HCT116 (cell line): ENCODE measurements at regions of chr14 and their contacts with region 1.

Region 1: DNA sequence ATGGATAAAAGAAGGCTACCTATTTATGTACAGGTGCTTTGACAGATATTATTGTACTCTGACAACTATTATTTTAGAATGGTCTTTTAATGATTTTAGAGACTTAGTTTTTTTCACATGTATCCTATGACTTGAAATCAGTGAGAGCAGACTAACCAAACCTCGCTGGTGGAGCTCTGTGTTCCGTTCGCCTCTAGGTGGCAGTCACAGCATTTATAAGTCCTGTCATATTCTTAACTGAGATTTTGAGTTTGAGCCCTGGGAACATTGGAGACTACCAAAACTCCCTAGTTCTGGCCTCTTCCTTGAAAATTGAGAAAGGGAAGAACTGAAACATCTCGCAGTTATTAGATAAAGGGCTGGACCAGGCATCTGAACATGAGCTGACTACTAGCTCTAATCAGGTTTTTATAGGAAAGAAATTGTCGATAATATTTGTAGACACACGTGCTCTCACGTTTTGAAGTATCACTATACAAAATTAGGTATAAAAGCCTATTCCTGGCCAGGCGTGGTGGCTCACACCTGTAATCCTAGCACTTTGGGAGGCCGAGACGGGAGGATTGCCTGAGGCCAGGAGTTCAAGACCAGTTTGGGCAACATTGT is 48.3 kb downstream of the TTLL5 start:
- DNase-seq: peak; percentile 68
- ATAC-seq: peak; percentile 58
- H3K4me3 ChIP-seq: no peak overlapping the region
- H3K27ac ChIP-seq: no peak overlapping the region
- H3K4me1 ChIP-seq: peaks cover 17 to 18% of the 10 kb centered on the region in 2 experiments
- H3K27me3 ChIP-seq: no peaks in the 10 kb centered on the region
- CTCF ChIP-seq: peak; percentile 68 to 89 (median 78)
- POLR2A ChIP-seq: no peak
- RAD21 ChIP-seq: peak; percentile 76

Region 2: DNA sequence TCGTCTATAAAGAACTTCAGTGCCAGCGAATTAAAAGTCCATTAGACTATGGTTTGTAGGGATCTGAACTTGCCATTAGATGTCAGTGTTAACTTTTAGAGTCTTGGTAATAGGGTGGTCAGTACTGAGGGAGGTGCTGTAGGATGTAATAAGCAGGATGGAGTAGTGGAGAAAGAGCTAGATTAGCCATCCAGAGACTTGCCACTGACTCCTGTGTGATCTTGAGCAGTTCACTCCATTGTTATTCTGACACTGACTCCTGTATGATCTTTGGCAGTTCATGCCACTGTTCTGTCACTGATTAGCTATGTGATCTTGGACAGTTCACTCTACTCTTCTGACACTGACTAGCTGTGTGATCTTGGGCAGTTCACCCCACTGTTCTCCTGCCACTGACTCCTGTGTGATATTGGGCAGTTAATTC is 85.3 kb after region 1 on chr14:
- CTCF ChIA-PET with region 1: interaction called, 40 read pairs
- POLR2A ChIA-PET with region 1: no interaction called
- RAD21 ChIA-PET with region 1: interaction called, 3 to 4 read pairs
- intact Hi-C with region 1: no loop called
- DNase-seq: peak; percentile 7
- ATAC-seq: peak; percentile 80
- H3K4me3 ChIP-seq: no peak overlapping the region
- H3K27ac ChIP-seq: no peak overlapping the region
- H3K4me1 ChIP-seq: no peaks in the 10 kb centered on the region
- H3K27me3 ChIP-seq: no peaks in the 10 kb centered on the region
- CTCF ChIP-seq: peak; percentile 22 to 85 (median 41); a peak in 4 of 6 replicates
- POLR2A ChIP-seq: no peak
- RAD21 ChIP-seq: peak; percentile 73

Region 3: GRCh38 chr14:76386915-76387782 is 677.8 kb after region 1 on chr14:
- CTCF ChIA-PET with region 1: interaction called, 14 read pairs
- POLR2A ChIA-PET with region 1: no interaction called
- RAD21 ChIA-PET with region 1: interaction called, 3 to 4 read pairs
- intact Hi-C with region 1: loop called (anchors 1 kb)
- DNase-seq: peak; percentile 37
- ATAC-seq: peak; percentile 99
- H3K4me3 ChIP-seq: no peak overlapping the region
- H3K27ac ChIP-seq: no peak overlapping the region
- H3K4me1 ChIP-seq: peaks cover 0 to 3% of the 10 kb centered on the region in 2 experiments; a peak in 1 of 4 replicates
- H3K27me3 ChIP-seq: peaks cover 39% of the 10 kb centered on the region
- CTCF ChIP-seq: peak; percentile 74 to 100 (median 98); a peak in 5 of 6 replicates
- POLR2A ChIP-seq: no peak
- RAD21 ChIP-seq: peak; percentile 93